Naive thymus-derived CD4-positive, alpha-beta T cell (primary cell): ENCODE measurements at regions of chr10 and their contacts with region 1.

Region 1: DNA sequence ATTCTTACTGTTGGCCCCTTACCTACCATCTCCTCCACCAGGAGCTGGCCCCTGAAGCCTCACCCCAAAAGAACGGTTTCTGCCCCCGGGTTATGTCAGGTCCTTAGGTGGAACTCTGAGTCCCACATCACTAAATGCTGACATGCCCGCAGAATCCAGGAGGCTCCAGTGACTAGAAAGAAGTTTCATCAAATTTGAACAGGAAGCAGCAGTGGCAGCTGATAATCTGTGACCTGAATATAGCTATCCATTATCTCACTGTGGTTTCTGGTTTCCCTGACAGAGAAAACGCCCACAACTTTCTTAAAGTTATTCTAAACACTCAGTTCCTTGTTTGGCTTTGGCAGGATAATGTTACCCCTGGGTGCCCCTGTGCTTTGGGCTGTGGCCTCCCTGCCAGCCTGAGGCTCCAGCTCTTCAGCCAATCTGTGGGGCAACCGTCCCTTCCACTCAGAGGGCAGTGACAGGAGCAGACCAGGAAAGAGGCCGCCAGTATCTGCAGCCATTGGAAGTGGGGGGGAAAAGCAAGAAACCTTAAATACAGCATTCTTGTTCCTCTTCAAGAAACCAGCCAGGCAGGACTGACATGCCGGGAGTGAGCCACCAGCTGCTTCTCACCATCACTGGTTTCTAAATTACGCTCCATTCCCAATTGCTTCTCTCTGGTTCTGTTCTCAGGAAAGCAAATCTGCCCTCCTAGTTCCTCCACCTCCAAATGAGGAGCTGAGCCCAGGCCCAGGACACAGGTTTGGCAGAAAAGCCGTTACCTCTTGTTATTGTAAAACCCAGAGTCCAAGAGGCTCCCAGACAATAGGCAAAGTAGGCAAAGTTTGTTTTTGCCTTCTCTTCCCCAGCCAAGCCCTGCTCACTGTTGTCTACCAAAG is 41.2 kb upstream of the VCL start:
- DNase-seq: peak in 8 of 9 donors; percentile 34 to 61 (median 46)
- ATAC-seq: peak; percentile 81
- H3K4me3 ChIP-seq: peak overlapping the region; percentile 28
- H3K4me3 Mint-ChIP-seq: peak overlapping the region; percentile 63 to 86 (median 76)
- H3K27ac ChIP-seq: peak overlapping the region; percentile 56
- H3K27ac Mint-ChIP-seq: peak overlapping the region; percentile 58 to 94 (median 87)
- H3K4me1 ChIP-seq: peaks cover 31 to 41% of the 10 kb centered on the region in 2 donors
- H3K4me1 Mint-ChIP-seq: peaks cover 26 to 57% (median 52%) of the 10 kb centered on the region in 7 donors
- H3K27me3 ChIP-seq: no peaks in the 10 kb centered on the region
- H3K27me3 Mint-ChIP-seq: peaks cover 0 to 4% (median 0%) of the 10 kb centered on the region in 5 donors

Region 2: GRCh38 chr10:73772280-73773151 is 184.2 kb before region 1 on chr10:
- CTCF ChIA-PET with region 1: no interaction called
- POLR2A ChIA-PET with region 1: no interaction called
- intact Hi-C with region 1: no loop called
- DNase-seq: peak; percentile 75 to 90 (median 83)
- ATAC-seq: peak; percentile 80
- H3K4me3 ChIP-seq: peak overlapping the region; percentile 69
- H3K4me3 Mint-ChIP-seq: peak overlapping the region; percentile 87 to 97 (median 95)
- H3K27ac ChIP-seq: peak overlapping the region; percentile 85
- H3K27ac Mint-ChIP-seq: peak overlapping the region; percentile 89 to 97 (median 94)
- H3K4me1 ChIP-seq: peaks cover 27 to 30% of the 10 kb centered on the region in 2 donors
- H3K4me1 Mint-ChIP-seq: peaks cover 34 to 73% (median 64%) of the 10 kb centered on the region in 7 donors
- H3K27me3 ChIP-seq: no peaks in the 10 kb centered on the region
- H3K27me3 Mint-ChIP-seq: no peaks in the 10 kb centered on the region

Region 3: GRCh38 chr10:73848821-73849489 is 107.8 kb before region 1 on chr10:
- CTCF ChIA-PET with region 1: interaction called, 4 read pairs
- POLR2A ChIA-PET with region 1: no interaction called
- intact Hi-C with region 1: loop called in 1 of 2 experiments (anchors 1 kb)
- DNase-seq: peak; percentile 82 to 93 (median 88)
- ATAC-seq: peak; percentile 100
- H3K4me3 ChIP-seq: no peak overlapping the region
- H3K4me3 Mint-ChIP-seq: peak overlapping the region in 5 of 10 donors; percentile 1 to 58 (median 37)
- H3K27ac ChIP-seq: peak overlapping the region; percentile 56
- H3K27ac Mint-ChIP-seq: peak overlapping the region; percentile 75 to 97 (median 94)
- H3K4me1 ChIP-seq: peaks cover 6 to 7% of the 10 kb centered on the region in 2 donors
- H3K4me1 Mint-ChIP-seq: peaks cover 11 to 23% (median 16%) of the 10 kb centered on the region in 7 donors
- H3K27me3 ChIP-seq: no peaks in the 10 kb centered on the region
- H3K27me3 Mint-ChIP-seq: no peaks in the 10 kb centered on the region

Region 4: DNA sequence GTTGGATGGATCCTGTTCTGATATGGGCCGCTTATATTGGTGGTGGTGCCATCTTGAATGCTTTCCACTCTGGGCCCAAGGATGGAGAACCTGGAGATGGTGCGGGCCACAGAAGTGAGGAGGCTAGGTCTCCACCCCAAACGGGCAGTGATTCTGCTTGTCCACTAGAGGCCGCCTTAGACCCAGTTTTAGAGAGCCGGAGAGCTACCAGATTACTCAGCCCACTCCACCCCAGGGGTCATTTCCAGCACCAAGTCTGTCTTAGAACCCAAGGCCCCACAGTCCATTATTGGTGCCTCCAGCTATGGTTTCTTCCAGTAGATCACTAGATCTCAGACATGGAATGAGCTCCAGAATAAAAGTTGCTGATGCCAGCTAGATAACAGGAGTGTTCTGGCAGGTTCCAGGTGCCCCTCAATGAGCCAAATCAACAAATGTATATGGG is 70.6 kb before region 1 on chr10:
- CTCF ChIA-PET with region 1: interaction called, 11 read pairs
- POLR2A ChIA-PET with region 1: no interaction called
- intact Hi-C with region 1: loop called in 1 of 2 experiments (anchors 1 kb)
- DNase-seq: peak; percentile 44 to 74 (median 69)
- ATAC-seq: peak; percentile 93
- H3K4me3 ChIP-seq: no peak overlapping the region
- H3K4me3 Mint-ChIP-seq: no peak overlapping the region
- H3K27ac ChIP-seq: no peak overlapping the region
- H3K27ac Mint-ChIP-seq: peak overlapping the region in 3 of 9 donors; percentile 39 to 60 (median 41)
- H3K4me1 ChIP-seq: no peaks in the 10 kb centered on the region
- H3K4me1 Mint-ChIP-seq: peaks cover 0 to 21% (median 0%) of the 10 kb centered on the region in 7 donors
- H3K27me3 ChIP-seq: no peaks in the 10 kb centered on the region
- H3K27me3 Mint-ChIP-seq: peaks cover 0 to 2% (median 0%) of the 10 kb centered on the region in 5 donors

Region 5: DNA sequence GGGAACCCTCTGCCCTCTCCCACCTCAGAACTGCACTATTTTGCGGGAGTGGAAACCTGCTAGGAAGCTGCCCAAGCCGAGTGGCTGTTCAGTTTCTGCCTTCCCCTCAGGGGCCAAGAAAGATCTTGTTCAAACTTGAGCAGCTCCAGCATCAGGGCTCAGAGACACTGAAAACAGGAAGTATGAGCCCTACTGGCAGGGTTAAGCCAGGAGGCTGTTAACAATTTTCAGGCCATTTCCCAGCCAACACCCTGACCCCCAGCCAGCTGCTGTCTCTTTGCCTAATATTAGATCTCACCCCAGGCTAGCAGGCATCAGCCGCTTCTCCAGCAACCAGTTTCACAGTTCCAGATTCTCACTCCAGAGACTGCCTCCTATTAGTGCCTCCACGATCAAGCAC is 36.6 kb before region 1 on chr10:
- CTCF ChIA-PET with region 1: no interaction called
- POLR2A ChIA-PET with region 1: no interaction called
- intact Hi-C with region 1: loop called in 1 of 2 experiments (anchors 1 kb)
- DNase-seq: peak in 4 of 9 donors; percentile 16 to 41 (median 37)
- ATAC-seq: peak; percentile 72
- H3K4me3 ChIP-seq: no peak overlapping the region
- H3K4me3 Mint-ChIP-seq: peak overlapping the region in 9 of 10 donors; percentile 1 to 58 (median 30)
- H3K27ac ChIP-seq: no peak overlapping the region
- H3K27ac Mint-ChIP-seq: peak overlapping the region in 1 of 9 donors; percentile 46
- H3K4me1 ChIP-seq: peaks cover 12 to 25% of the 10 kb centered on the region in 2 donors
- H3K4me1 Mint-ChIP-seq: peaks cover 29 to 45% (median 38%) of the 10 kb centered on the region in 7 donors
- H3K27me3 ChIP-seq: peaks cover 0 to 5% of the 10 kb centered on the region in 2 donors
- H3K27me3 Mint-ChIP-seq: peaks cover 15 to 53% (median 23%) of the 10 kb centered on the region in 5 donors

Region 6: DNA sequence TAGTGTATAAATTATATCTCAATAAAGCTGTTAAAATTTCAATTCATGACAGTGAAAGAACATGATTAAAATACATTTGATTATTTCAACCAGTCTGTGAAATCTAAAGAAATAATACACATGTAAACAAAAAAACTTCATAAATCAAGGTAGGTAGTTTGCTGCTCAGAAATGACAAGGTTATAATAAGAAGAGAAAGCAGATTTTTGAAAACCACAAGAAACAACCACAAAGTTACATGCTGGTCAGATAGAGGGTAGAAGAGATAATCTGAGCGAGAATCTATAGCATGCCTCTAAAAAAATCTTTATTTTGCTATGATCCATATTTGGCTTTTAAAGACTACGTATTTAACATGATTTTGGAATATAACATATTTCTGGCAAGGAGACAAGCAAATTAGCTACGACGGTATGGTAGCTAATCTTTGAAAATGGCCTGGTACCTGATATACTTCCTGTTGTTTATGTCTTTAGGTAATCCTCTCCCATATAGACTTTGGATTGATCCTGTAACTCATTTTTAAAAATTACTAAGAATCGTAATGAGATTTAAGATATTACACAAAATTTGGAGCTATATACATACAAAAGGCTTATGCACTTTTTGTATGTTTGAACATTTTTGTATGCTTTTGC is 17.7 kb after region 1 on chr10:
- CTCF ChIA-PET with region 1: no interaction called
- POLR2A ChIA-PET with region 1: interaction called, 6 read pairs
- intact Hi-C with region 1: loop called (anchors 1 to 2 kb)
- DNase-seq: peak in 3 of 9 donors; percentile 11 to 33 (median 19)
- ATAC-seq: peak; percentile 54
- H3K4me3 ChIP-seq: no peak overlapping the region
- H3K4me3 Mint-ChIP-seq: peak overlapping the region in 9 of 10 donors; percentile 16 to 78 (median 61)
- H3K27ac ChIP-seq: no peak overlapping the region
- H3K27ac Mint-ChIP-seq: peak overlapping the region in 7 of 9 donors; percentile 13 to 77 (median 37)
- H3K4me1 ChIP-seq: peaks cover 13 to 16% of the 10 kb centered on the region in 2 donors
- H3K4me1 Mint-ChIP-seq: peaks cover 0 to 27% (median 22%) of the 10 kb centered on the region in 7 donors
- H3K27me3 ChIP-seq: no peaks in the 10 kb centered on the region
- H3K27me3 Mint-ChIP-seq: peaks cover 0 to 16% (median 0%) of the 10 kb centered on the region in 5 donors

Region 7: DNA sequence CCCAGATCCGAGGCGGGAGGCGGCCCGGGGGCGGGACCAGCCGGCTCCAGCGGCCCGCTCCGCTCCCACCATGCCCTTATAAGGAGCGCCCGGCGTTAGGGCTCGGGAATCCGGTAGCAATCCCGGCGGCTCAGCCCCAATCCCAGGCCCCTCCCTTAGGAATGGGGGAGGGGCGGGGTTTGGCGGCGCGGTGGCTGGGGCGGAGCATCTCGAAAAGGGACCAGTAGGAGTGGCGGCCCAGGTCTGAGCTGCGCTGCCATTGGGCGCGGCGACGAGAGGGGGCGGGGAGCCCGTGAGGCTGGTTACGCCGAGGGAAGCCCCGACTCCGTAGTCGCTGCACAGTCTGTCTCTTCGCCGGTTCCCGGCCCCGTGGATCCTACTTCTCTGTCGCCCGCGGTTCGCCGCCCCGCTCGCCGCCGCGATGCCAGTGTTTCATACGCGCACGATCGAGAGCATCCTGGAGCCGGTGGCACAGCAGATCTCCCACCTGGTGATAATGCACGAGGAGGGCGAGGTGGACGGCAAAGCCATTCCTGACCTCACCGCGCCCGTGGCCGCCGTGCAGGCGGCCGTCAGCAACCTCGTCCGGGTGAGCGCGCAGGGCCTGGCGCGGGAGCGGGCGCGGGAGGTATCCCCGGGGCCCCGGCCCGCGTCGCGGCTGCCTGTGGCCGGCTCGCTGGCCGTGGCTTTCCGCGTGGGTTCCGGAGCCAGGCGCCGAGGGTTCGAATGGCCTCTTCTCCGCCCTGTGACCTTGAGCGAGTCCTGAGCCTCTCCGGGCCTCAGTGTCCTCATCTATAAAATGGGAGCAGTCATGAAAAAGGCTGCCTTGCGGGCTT is 41.3 kb after region 1 on chr10 and contains the start of gene VCL:
- CTCF ChIA-PET with region 1: interaction called, 3 read pairs
- POLR2A ChIA-PET with region 1: interaction called, 6 read pairs
- intact Hi-C with region 1: loop called (anchors 1 kb)
- DNase-seq: peak; percentile 90 to 97 (median 95)
- ATAC-seq: peak; percentile 99
- H3K4me3 ChIP-seq: peak within 1 kb of the TSS; percentile 71
- H3K4me3 Mint-ChIP-seq: peak within 1 kb of the TSS; percentile 83 to 100 (median 97)
- H3K27ac ChIP-seq: peak within 1 kb of the TSS; percentile 91
- H3K27ac Mint-ChIP-seq: peak within 1 kb of the TSS; percentile 83 to 99 (median 98)
- H3K4me1 ChIP-seq: peaks cover 19 to 22% of the 10 kb centered on the region in 2 donors
- H3K4me1 Mint-ChIP-seq: peaks cover 43 to 53% (median 48%) of the 10 kb centered on the region in 7 donors
- H3K27me3 ChIP-seq: no peaks in the 10 kb centered on the region
- H3K27me3 Mint-ChIP-seq: no peaks in the 10 kb centered on the region
- total RNA-seq, gene VCL: 9.0 to 67.7 (median 21.6) TPM

Region 8: DNA sequence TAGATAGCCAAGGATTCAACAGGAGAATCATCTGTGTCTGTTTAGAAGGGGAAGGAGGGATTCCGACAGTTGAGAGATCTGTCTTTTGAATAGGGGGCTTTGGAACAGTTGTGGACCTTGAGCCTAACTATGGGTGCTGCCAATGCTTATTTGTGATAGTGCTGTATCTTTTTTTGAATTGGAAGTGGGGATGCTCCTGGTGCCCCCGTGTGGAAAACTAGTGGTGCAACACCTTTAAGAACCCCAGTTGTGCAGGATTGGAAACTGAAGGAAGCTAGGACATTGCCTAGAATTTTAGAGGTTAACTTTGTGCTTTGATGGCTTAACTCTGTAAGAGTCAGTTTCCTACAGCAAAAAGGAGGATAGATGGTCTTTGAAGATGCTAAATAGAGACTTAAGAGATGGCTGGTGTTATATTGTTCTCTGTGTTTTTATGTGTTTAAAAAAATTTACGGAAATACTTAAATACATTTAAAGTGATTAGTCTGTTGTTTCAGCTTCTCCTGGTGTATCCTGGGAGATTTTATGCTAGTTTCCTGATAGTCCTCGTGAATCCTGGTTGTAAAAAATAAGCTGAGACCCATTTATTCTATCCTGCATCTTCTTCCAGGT is 124.6 kb after region 1 on chr10:
- CTCF ChIA-PET with region 1: interaction called, 6 read pairs
- POLR2A ChIA-PET with region 1: no interaction called
- intact Hi-C with region 1: loop called (anchors 1 to 10 kb)
- DNase-seq: peak in 7 of 9 donors; percentile 14 to 51 (median 41)
- ATAC-seq: peak; percentile 71
- H3K4me3 ChIP-seq: no peak overlapping the region
- H3K4me3 Mint-ChIP-seq: no peak overlapping the region
- H3K27ac ChIP-seq: no peak overlapping the region
- H3K27ac Mint-ChIP-seq: no peak overlapping the region
- H3K4me1 ChIP-seq: peaks cover 0 to 15% of the 10 kb centered on the region in 2 donors
- H3K4me1 Mint-ChIP-seq: peaks cover 0 to 40% (median 6%) of the 10 kb centered on the region in 7 donors
- H3K27me3 ChIP-seq: no peaks in the 10 kb centered on the region
- H3K27me3 Mint-ChIP-seq: no peaks in the 10 kb centered on the region